Activated CD8-positive, alpha-beta memory T cell treated with anti-CD3 and anti-CD28 coated beads, Interleukin-2, amount 10 ng/mL, durations not matched to agents 7 days and 5 days (primary cell): ENCODE measurements at regions of chr6 and their contacts with region 1.

Region 1: DNA sequence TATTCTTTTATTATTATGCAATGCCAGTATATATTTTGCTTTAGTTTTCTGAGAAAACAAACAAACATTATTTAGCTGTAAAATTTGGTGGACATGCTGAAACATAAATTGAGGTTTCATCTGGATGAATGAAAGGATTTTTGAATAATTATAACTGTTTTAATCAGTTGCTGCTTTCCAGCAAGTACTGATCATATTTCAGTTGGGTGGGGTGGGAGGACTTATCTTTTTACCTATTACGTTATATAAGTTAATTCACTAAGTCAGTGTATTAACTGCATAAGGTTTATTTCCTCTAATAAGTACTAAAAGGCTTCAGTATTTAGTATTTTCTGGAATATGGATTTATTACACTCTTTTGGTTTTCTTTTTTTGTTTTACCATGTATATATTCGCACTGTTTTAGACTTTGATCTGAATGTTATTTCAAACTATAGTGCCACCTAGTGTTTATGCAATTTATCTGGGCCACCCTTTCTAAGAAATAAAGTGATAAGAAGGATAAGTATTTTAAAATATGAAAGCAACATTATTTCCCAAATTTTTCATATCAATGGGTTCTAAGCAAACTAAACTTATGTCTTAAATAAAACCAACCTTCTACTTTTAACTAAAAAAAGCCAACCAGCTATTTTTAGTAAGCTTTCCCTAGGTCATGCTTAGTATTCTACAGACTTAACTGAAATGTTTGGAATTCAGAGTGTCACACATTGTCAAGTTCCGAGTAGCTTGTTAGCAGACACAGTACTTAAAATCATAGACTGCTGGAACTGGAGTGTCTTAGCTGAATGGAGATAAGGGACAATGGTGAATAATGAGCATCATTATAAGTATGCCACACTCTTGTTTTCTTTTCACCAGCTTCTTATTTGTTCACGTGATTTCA is 105.4 kb upstream of the MCHR2 start:
- DNase-seq: no peak
- ATAC-seq: no peak
- H3K4me3 Mint-ChIP-seq: no peak overlapping the region
- H3K27ac Mint-ChIP-seq: no peak overlapping the region
- H3K4me1 Mint-ChIP-seq: no peaks in the 10 kb centered on the region
- H3K27me3 Mint-ChIP-seq: peaks cover 44% of the 10 kb centered on the region

Region 2: DNA sequence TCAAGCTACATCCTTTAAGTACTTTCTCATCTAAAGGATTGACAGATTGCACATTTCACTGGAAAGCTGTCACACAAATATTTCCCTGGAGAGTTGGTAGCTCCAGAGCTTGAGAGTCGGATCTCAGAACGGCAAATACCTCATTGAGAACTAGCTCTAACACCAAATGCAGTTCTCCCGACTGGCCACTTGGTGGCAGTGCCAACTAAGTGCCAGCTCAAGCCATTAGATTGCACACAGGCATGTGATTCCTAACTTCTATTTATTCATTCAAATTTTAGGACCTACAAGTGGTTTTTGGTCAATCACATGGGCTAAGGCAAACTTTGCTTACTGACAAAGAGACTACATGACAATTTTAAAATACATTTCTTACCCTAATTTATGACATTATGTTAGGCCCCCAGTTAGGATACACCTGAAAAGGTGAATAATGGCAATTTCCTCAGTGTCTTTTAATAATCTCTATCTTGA is 97.5 kb before region 1 on chr6:
- CTCF ChIA-PET with region 1: interaction called, 36 read pairs
- DNase-seq: peak; percentile 58
- ATAC-seq: peak; percentile 53
- H3K4me3 Mint-ChIP-seq: no peak overlapping the region
- H3K27ac Mint-ChIP-seq: no peak overlapping the region
- H3K4me1 Mint-ChIP-seq: no peaks in the 10 kb centered on the region
- H3K27me3 Mint-ChIP-seq: peaks cover 40% of the 10 kb centered on the region

Region 3: DNA sequence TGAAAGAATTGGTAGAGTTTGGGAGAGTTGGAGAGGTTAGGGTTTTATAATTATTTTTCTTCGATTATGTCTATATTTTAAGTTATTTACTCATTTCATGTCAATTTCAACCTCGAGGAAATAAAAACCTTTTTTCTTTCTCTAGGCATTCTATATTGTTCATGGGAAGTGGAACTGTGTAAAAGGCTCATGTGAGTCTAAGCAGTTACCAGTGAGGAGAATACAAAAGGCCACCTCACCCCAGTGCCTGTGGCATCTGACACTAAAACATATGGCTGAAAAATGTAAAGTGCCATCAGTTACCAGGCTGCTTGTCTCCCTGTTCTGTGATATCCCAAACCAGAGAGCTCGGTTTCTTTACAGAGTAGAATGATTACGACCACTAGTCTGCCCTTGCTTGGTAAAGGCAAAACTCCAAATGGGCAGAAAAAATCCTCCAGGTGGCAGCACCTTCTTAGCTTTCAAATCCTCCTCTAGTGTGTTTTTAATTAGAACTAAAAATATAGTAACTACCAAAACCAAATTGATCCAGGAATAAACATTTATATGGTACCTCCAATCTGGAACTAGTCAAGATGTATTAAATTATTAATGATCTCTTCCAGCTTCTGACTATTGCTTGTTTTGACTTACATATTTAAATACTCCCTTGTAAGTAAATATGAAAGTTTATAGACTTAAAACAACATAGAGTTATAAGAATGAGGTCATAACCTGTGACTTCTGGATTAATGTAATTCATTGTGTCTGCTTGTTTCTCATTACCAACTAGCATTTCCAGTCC is 17.2 kb after region 1 on chr6:
- CTCF ChIA-PET with region 1: interaction called, 14 read pairs
- DNase-seq: peak; percentile 66
- ATAC-seq: peak; percentile 65
- H3K4me3 Mint-ChIP-seq: no peak overlapping the region
- H3K27ac Mint-ChIP-seq: no peak overlapping the region
- H3K4me1 Mint-ChIP-seq: peaks cover 19% of the 10 kb centered on the region
- H3K27me3 Mint-ChIP-seq: peaks cover 29% of the 10 kb centered on the region

Region 4: GRCh38 chr6:100126790-100127484 is 27.5 kb after region 1 on chr6:
- CTCF ChIA-PET with region 1: no interaction called
- DNase-seq: no peak
- ATAC-seq: peak; percentile 83
- H3K4me3 Mint-ChIP-seq: no peak overlapping the region
- H3K27ac Mint-ChIP-seq: peak overlapping the region; percentile 88
- H3K4me1 Mint-ChIP-seq: peaks cover 37% of the 10 kb centered on the region
- H3K27me3 Mint-ChIP-seq: peaks cover 2% of the 10 kb centered on the region